CD14-positive monocyte (primary cell): ENCODE measurements at regions of chr5 and their contacts with region 1.

Region 1: DNA sequence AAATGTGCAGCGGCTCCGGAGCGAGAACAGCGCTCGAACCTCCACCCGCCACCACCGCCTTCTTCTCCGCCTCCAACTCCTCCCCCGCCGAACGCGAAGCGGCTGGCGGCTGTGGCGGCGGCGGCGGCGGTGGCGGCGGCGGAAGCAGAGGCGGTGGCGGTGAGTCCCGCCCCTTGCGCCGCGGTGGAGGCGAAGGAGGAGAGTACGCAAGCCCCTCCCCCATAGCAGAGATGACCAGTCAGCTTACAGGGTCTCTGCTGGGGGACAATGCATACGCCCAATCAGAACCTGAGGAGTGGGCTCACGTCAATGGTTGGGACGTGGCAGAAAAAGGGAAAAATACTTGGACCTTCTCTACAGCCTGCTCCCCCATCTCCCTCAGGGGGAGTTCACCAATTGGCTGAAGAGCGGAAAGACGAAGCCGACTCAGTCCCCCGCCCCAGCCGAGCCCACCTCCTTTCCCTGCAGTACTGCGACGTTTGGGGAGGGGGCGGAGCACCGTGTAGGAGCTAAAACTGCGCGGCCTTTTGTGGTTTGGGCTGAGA is at the start of gene PJA2:
- DNase-seq: peak; percentile 98 to 100 (median 99)
- H3K4me3 ChIP-seq: peak within 1 kb of the TSS; percentile 71 to 92 (median 77)
- H3K4me3 Mint-ChIP-seq: peak within 1 kb of the TSS; percentile 95 to 100
- H3K27ac ChIP-seq: peak within 1 kb of the TSS; percentile 92 to 97
- H3K27ac Mint-ChIP-seq: peak within 1 kb of the TSS; percentile 97 to 100 (median 99)
- H3K4me1 ChIP-seq: peaks cover 5 to 35% of the 10 kb centered on the region in 2 donors
- H3K4me1 Mint-ChIP-seq: peaks cover 40% of the 10 kb centered on the region
- H3K27me3 ChIP-seq: no peaks in the 10 kb centered on the region
- H3K27me3 Mint-ChIP-seq: no peaks in the 10 kb centered on the region
- CTCF ChIP-seq: peak; percentile 14
- polyA plus RNA-seq, gene PJA2: 36.2 to 74.1 (median 49.7) TPM

Region 2: GRCh38 chr5:108748401-108749127 is 661.4 kb before region 1 on chr5:
- intact Hi-C with region 1: loop called in 1 of 2 experiments (anchors 10 kb)
- DNase-seq: peak; percentile 94 to 96 (median 95)
- H3K4me3 ChIP-seq: peak overlapping the region; percentile 82 to 97 (median 91)
- H3K4me3 Mint-ChIP-seq: peak overlapping the region; percentile 98 to 100
- H3K27ac ChIP-seq: peak overlapping the region; percentile 85 to 89
- H3K27ac Mint-ChIP-seq: peak overlapping the region; percentile 91 to 95 (median 93)
- H3K4me1 ChIP-seq: peaks cover 12 to 28% of the 10 kb centered on the region in 2 donors
- H3K4me1 Mint-ChIP-seq: peaks cover 35% of the 10 kb centered on the region
- H3K27me3 ChIP-seq: no peaks in the 10 kb centered on the region
- H3K27me3 Mint-ChIP-seq: peaks cover 3 to 6% (median 4%) of the 10 kb centered on the region in 3 donors
- CTCF ChIP-seq: no peak

Region 3: GRCh38 chr5:109316634-109317033 is 93.3 kb before region 1 on chr5:
- intact Hi-C with region 1: no loop called
- DNase-seq: peak in 1 of 3 donors; percentile 20
- H3K4me3 ChIP-seq: no peak overlapping the region
- H3K4me3 Mint-ChIP-seq: peak overlapping the region in 1 of 2 donors; percentile 56
- H3K27ac ChIP-seq: no peak overlapping the region
- H3K27ac Mint-ChIP-seq: no peak overlapping the region
- H3K4me1 ChIP-seq: no peaks in the 10 kb centered on the region
- H3K4me1 Mint-ChIP-seq: peaks cover 5% of the 10 kb centered on the region
- H3K27me3 ChIP-seq: no peaks in the 10 kb centered on the region
- H3K27me3 Mint-ChIP-seq: no peaks in the 10 kb centered on the region
- CTCF ChIP-seq: no peak

Region 4: DNA sequence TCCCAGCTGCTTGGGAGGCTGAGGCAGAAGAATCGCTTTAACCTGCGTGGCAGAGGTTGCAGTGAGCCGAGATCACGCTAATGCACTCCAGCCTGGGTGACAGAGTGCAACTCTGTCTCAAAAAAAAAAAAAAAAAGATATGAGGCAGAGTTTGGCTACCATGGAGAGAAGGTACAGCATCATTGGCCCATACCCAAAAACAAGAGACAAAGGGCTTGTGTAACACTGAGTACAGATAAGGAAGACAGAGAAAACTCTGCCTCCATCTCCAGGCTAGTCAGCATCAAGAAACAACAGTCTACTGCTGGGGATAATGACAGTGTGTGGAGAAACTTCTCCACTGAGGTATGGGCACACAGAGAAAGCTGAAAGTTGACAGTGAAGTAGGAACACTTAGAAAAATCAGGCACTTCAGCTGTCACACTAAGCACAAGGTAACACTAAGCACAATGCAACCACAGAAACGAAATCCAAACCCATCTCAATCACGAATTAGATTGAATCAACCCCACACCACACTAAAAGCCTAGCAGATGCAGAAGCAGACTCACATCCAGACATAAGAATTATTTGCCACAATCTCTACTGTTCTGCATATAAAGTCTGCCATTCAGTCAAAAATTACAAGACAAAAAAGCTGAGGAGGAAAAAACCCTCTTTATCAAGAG is 10.7 kb before region 1 on chr5:
- intact Hi-C with region 1: loop called in 1 of 2 experiments (anchors 1 kb)
- DNase-seq: no peak
- H3K4me3 ChIP-seq: no peak overlapping the region
- H3K4me3 Mint-ChIP-seq: no peak overlapping the region
- H3K27ac ChIP-seq: peak overlapping the region in 1 of 2 donors; percentile 50
- H3K27ac Mint-ChIP-seq: peak overlapping the region in 5 of 7 donors; percentile 29 to 58 (median 36)
- H3K4me1 ChIP-seq: peaks cover 5 to 11% of the 10 kb centered on the region in 2 donors
- H3K4me1 Mint-ChIP-seq: peaks cover 56% of the 10 kb centered on the region
- H3K27me3 ChIP-seq: no peaks in the 10 kb centered on the region
- H3K27me3 Mint-ChIP-seq: no peaks in the 10 kb centered on the region
- CTCF ChIP-seq: no peak

Region 5: GRCh38 chr5:109454731-109455505 is 45.0 kb after region 1 on chr5:
- intact Hi-C with region 1: no loop called
- DNase-seq: no peak
- H3K4me3 ChIP-seq: no peak overlapping the region
- H3K4me3 Mint-ChIP-seq: no peak overlapping the region
- H3K27ac ChIP-seq: no peak overlapping the region
- H3K27ac Mint-ChIP-seq: no peak overlapping the region
- H3K4me1 ChIP-seq: peaks cover 7 to 9% of the 10 kb centered on the region in 2 donors
- H3K4me1 Mint-ChIP-seq: peaks cover 10% of the 10 kb centered on the region
- H3K27me3 ChIP-seq: no peaks in the 10 kb centered on the region
- H3K27me3 Mint-ChIP-seq: peaks cover 0 to 3% (median 2%) of the 10 kb centered on the region in 3 donors
- CTCF ChIP-seq: no peak

Region 6: DNA sequence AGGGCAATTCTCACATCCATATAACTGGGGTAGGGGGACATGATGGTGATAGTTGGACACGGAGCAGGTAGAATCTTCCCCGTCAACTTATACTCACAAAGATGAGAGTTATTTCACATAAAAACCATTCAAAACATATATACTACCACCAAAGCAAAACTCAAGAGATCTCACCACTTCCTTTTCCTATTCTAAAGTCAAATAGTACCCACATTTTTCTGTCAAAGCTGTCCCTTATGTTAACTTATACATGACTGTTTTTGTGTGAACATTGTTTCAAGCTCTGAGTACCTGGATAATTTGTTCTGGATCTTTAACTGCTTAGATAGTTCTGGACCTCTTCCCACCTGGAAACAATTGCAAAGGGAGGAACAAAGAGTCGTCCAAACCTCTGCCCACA is 184.3 kb after region 1 on chr5:
- intact Hi-C with region 1: no loop called
- DNase-seq: no peak
- H3K4me3 ChIP-seq: no peak overlapping the region
- H3K4me3 Mint-ChIP-seq: no peak overlapping the region
- H3K27ac ChIP-seq: no peak overlapping the region
- H3K27ac Mint-ChIP-seq: no peak overlapping the region
- H3K4me1 ChIP-seq: no peaks in the 10 kb centered on the region
- H3K4me1 Mint-ChIP-seq: no peaks in the 10 kb centered on the region
- H3K27me3 ChIP-seq: no peaks in the 10 kb centered on the region
- H3K27me3 Mint-ChIP-seq: peaks cover 0 to 2% (median 0%) of the 10 kb centered on the region in 3 donors
- CTCF ChIP-seq: no peak

Region 7: DNA sequence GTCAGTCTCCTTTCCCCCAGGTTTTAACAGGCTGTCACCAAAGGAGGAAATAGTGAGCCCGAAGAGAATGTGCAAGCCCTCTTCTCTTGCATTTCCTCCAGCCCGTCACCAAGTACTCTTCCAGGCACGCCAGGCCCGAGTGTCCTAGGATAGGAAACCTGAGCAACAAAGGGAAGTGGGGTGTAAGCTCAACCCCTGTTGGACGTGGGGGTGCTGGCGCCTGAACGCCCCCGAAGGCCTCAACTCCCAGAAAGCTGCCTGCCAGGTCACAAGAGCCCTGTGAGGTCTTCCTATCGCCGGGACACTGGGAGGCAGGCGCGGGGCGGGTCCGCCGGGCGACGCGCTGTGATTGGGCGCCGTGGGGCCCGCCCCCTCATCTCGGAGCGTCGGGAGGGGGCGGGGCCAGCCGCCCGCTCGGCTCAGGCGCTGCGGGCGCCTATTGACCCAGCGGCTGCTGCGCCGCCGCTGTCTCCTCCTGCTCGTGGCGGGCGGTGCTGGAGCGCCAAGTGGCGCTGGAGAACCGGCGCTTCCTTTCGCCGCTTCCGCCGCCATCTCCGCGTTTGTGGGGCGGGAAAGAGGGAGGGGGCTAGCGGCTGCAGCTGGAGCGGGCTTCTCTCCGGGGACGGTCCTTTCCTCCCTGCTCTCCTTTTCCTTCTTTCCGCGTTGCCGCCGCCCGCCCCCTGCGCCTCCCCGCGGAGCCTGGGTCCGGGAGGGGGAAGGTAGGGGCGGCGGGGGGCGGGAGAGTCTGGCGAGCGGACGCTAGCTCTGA is 279.2 kb after region 1 on chr5:
- intact Hi-C with region 1: loop called in 1 of 2 experiments (anchors 10 kb)
- DNase-seq: peak; percentile 88 to 92 (median 88)
- H3K4me3 ChIP-seq: peak overlapping the region; percentile 75 to 94 (median 81)
- H3K4me3 Mint-ChIP-seq: peak overlapping the region; percentile 87 to 98
- H3K27ac ChIP-seq: peak overlapping the region; percentile 85 to 94
- H3K27ac Mint-ChIP-seq: peak overlapping the region; percentile 96 to 100 (median 99)
- H3K4me1 ChIP-seq: peaks cover 29 to 42% of the 10 kb centered on the region in 2 donors
- H3K4me1 Mint-ChIP-seq: peaks cover 44% of the 10 kb centered on the region
- H3K27me3 ChIP-seq: no peaks in the 10 kb centered on the region
- H3K27me3 Mint-ChIP-seq: no peaks in the 10 kb centered on the region
- CTCF ChIP-seq: peak; percentile 37